Activated CD4-positive, alpha-beta T cell treated with anti-CD3 and anti-CD28 coated beads, Interleukin-2, amount 10 ng/mL, durations not matched to agents 24 days and 14 days (primary cell): ENCODE measurements at regions of chr2 and their contacts with region 1.

Region 1: GRCh38 chr2:27095745-27096651 is 9.4 kb downstream of the KHK start:
- DNase-seq: peak; percentile 85
- H3K4me3 Mint-ChIP-seq: peak overlapping the region; percentile 71
- H3K27ac Mint-ChIP-seq: peak overlapping the region; percentile 48
- H3K4me1 Mint-ChIP-seq: peaks cover 15% of the 10 kb centered on the region
- H3K27me3 Mint-ChIP-seq: no peaks in the 10 kb centered on the region

Region 2: DNA sequence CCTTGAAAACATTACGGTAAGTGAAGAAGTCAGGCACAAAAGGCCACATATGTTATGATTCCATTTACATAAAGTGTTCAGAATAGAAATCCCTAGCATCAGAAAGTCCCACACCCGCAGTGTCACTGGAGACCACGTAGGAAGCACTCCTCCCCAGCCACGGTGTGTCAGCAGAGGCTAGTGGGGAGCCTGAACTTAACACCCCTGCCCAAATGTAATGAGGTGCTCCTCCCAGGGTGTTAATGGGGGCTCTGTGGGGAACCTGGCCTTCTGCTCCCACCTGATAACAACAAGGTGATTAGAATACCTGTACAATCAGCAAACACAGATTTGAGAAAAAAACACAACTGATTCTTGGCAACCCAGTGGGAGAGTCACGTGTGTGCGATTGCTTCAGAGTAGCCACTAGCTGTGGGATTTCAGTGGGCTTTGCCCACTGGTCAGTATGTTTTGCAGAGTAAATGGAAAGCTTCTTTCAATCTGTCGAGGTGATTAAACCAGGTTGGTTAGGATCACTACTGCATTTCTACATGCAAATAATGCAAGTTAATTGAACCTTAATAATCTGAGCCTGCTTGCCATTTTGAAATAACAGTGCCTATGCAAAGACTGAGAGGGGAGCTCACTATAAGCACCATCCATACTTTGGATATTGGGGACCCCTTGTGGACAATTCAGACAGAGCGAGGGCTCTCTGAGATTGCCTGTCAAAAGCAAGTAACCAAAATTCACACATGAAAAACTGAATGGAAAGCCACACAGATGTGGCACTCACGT is 95.2 kb after region 1 on chr2:
- intact Hi-C with region 1: loop called (anchors 1 kb)
- DNase-seq: peak; percentile 86
- H3K4me3 Mint-ChIP-seq: no peak overlapping the region
- H3K27ac Mint-ChIP-seq: no peak overlapping the region
- H3K4me1 Mint-ChIP-seq: no peaks in the 10 kb centered on the region
- H3K27me3 Mint-ChIP-seq: peaks cover 20% of the 10 kb centered on the region